Left ventricle myocardium superior (tissue), 1 donor: ENCODE measurements at regions of chr11 and their contacts with region 1.

Region 1: GRCh38 chr11:133966921-133967598 is 10.3 kb upstream of the IGSF9B start:
- DNase-seq: peak; percentile 86
- ATAC-seq: peak; percentile 80

Region 2: DNA sequence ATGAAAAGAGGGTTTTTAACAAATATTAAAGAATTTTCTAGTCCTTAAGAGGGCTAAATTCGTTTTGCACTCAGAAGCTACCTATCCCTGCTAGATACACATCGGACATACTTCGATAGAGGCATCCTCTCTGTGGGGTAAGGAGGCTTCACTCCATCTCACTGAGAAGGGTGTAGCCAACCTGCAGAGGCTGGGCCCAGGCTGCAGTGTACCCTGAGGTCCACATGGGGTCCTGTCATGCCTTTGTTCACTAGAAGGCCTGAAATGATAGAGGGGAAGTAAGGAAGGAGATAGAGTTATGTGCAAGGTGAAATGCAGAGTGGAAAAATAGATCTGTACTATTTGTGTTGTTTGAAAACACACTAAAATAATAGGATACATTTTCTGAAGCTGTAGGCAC is 55.9 kb before region 1 on chr11:
- intact Hi-C with region 1: no loop called
- DNase-seq: no peak
- ATAC-seq: no peak

Region 3: GRCh38 chr11:134024420-134025081 is 57.5 kb after region 1 on chr11:
- intact Hi-C with region 1: loop called (anchors 10 kb)
- DNase-seq: peak; percentile 16
- ATAC-seq: no peak